Activated CD4-positive, alpha-beta T cell treated with anti-CD3 and anti-CD28 coated beads, Interleukin-2, amount 10 ng/mL, durations not matched to agents 24 days and 14 days (primary cell): ENCODE measurements at regions of chr13 and their contacts with region 1.

Region 1: DNA sequence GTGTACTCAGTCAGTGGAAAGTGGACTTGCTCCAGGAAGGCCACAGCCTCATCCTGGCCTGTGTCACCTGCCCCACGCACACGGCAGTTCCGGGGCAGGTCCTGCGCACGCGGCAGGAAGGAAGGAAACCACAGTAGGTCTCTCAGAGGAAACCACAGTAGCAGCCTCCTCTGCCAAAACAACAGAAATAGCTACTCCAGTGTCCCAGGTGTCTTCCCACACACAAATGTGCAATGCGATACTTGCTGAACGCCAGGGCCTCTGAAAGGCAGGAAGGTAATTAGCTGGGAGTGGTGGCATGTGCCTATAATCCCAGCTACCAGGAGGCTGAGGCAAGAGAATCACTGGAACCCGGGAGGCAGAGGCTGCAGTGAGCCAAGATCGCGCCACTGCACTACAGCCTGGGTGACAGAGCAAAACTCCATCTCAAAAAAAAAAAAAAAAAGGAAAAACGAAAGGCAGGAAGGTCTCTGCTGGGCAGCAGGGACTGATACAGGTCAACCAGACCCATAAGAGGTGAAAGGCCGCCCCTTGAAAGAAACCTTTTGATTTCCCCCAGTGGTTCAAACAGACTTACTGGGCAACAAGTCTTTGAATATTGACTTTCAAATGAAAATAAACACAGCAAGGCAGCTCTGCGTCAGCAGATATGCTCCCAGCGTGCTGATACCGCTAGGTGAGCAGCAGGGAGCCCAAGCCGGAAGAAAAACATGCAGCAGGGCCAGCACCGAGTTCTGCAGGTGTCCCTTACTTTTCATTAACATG is 49.5 kb downstream of the CRYL1 start:
- DNase-seq: peak; percentile 90
- H3K4me3 Mint-ChIP-seq: peak overlapping the region; percentile 74
- H3K27ac Mint-ChIP-seq: peak overlapping the region; percentile 86
- H3K4me1 Mint-ChIP-seq: peaks cover 42% of the 10 kb centered on the region
- H3K27me3 Mint-ChIP-seq: peaks cover 1% of the 10 kb centered on the region

Region 2: DNA sequence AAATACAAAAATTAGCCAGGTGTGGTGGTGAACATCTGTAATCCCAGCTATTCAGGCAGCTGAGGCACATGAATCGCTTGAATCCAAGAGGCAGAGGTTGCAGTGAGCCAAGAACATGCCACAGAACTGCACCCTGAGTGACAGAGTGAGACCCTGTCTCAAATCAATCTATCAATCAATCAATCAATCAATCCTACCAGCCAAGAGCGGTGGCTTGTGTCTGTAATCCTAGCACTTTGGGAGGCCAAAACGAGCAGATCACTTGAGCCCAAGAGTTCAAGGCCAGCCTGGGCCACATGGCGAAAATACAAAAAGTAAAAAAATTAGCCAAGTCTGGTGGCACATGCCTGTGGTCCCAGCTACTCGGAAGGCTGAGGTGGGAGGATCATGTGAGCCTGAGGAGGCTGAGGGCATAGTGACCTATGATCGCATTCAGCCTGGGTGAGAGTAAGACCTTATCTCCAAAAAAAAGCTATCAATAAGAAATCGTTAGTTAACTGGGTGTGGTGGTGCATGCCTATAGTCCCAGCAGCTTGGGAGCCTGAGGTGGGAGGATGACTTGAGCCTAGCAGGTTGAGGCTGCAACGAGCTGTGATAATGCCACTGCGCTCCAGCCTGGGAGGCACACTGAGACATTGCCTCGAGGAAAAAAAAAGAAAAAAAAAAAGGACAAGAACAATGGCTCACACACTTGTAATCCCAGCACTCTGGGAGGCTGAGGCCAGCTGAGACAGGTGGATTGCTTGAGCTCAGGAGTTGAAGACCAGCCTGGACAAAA is 709.7 kb before region 1 on chr13:
- intact Hi-C with region 1: no loop called
- DNase-seq: no peak
- H3K4me3 Mint-ChIP-seq: no peak overlapping the region
- H3K27ac Mint-ChIP-seq: peak overlapping the region; percentile 34
- H3K4me1 Mint-ChIP-seq: peaks cover 36% of the 10 kb centered on the region
- H3K27me3 Mint-ChIP-seq: no peaks in the 10 kb centered on the region

Region 3: DNA sequence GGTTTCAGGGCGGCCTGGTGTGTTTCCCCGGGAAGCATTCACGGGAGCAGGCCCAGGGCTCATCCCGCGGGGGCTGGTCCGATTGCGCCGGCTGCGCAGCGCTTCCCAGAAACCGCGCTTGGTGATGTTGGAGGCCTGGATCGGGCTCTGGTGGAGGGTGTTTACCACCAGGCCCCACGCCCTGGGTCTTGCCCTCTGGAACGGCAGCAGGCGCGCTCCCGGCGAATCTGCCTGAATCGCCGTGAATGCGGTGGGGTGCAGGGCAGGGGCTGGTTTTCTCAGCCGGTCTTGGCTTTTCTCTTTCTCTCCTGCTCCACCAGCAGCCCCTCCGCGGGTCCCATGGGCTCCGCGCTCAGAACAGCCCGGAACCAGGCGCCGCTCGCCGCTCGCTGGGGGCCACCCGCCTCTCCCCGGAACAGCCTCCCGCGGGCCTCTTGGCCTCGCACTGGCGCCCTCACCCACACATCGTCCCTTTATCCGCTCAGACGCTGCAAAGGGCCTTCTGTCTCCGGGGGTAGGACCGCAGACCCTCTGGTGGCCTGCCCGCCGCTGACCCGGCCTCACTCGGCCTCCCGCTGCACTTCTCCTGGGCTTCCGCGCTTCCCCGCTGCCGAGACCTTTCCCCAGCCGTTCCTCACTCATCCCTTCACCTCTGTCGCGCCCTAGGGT is 174.6 kb before region 1 on chr13:
- intact Hi-C with region 1: no loop called
- DNase-seq: no peak
- H3K4me3 Mint-ChIP-seq: no peak overlapping the region
- H3K27ac Mint-ChIP-seq: no peak overlapping the region
- H3K4me1 Mint-ChIP-seq: no peaks in the 10 kb centered on the region
- H3K27me3 Mint-ChIP-seq: peaks cover 44% of the 10 kb centered on the region

Region 4: GRCh38 chr13:20411638-20412360 is 64.3 kb before region 1 on chr13:
- intact Hi-C with region 1: loop called (anchors 1 kb)
- DNase-seq: peak; percentile 85
- H3K4me3 Mint-ChIP-seq: peak overlapping the region; percentile 68
- H3K27ac Mint-ChIP-seq: peak overlapping the region; percentile 81
- H3K4me1 Mint-ChIP-seq: peaks cover 26% of the 10 kb centered on the region
- H3K27me3 Mint-ChIP-seq: no peaks in the 10 kb centered on the region